ENCODE measurements at regions of chr7 and their contacts with region 1.

Region 1: DNA sequence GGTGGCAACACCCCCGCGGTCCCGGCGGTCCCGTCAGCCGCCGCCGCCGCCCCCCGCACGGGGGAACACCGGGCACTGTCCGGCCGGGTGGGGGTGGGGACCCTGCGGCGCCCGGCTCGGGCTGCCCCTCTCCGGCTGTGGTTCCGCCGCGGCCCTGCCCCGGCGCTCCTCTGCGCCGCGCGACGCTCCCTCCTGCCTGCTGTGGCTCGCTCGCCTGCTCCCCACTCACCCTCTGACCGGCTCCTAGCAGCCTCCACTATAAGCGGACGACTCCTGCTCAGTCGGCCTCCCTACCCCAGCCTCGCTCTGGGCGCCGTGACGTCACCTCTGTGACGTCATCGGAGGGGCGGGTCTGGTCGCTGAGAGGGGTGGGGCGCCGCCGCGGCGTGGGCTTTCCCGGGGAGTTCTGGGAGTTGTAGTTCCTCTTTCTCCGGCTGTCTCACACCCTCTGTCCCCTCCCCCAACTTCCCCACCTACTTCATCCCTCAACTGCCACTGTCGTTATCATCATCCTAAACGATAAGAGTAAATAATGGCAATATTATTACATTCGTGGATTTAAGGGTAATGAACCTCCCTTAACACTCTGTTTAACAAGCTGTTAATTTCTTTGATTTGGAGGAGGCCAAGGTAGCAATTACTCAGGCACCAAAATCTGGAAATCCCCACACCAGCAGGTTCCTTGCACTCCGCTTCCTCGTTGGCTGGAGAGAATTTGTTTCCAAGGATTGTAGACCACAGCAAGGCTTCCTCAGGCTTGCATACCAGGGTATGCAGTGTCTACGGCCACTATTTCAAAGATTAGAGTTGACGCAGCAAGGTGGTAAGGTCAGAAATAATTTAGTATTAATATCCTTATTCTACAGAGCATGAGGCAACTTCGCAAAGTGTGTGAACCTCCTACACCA is at the start of gene UBE2H:
- DNase-seq: peak; percentile 68 to 89
- H3K4me3 ChIP-seq: peak within 1 kb of the TSS; percentile 76
- H3K27ac ChIP-seq: peak within 1 kb of the TSS; percentile 100
- H3K4me1 ChIP-seq: peaks cover 42% of the 10 kb centered on the region
- H3K27me3 ChIP-seq: no peaks in the 10 kb centered on the region
- CTCF ChIP-seq: no peak
- total RNA-seq, gene UBE2H: 211 TPM in 2 replicates

Region 2: GRCh38 chr7:129664029-129665012 is 288.6 kb before region 1 on chr7:
- CTCF ChIA-PET with region 1: no interaction called
- POLR2A ChIA-PET with region 1: no interaction called
- intact Hi-C with region 1: loop called (anchors 10 kb)
- DNase-seq: peak; percentile 14 to 53
- H3K4me3 ChIP-seq: no peak overlapping the region
- H3K27ac ChIP-seq: peak overlapping the region; percentile 53
- H3K4me1 ChIP-seq: peaks cover 17% of the 10 kb centered on the region
- H3K27me3 ChIP-seq: no peaks in the 10 kb centered on the region
- CTCF ChIP-seq: peak; percentile 77

Region 3: GRCh38 chr7:129825496-129826267 is 127.2 kb before region 1 on chr7:
- CTCF ChIA-PET with region 1: interaction called, 5 read pairs
- POLR2A ChIA-PET with region 1: interaction called, 3 read pairs
- intact Hi-C with region 1: loop called (anchors 1 kb)
- DNase-seq: peak; percentile 70 to 95
- H3K4me3 ChIP-seq: peak overlapping the region; percentile 88
- H3K27ac ChIP-seq: peak overlapping the region; percentile 91
- H3K4me1 ChIP-seq: peaks cover 23% of the 10 kb centered on the region
- H3K27me3 ChIP-seq: no peaks in the 10 kb centered on the region
- CTCF ChIP-seq: peak; percentile 70

Region 4: DNA sequence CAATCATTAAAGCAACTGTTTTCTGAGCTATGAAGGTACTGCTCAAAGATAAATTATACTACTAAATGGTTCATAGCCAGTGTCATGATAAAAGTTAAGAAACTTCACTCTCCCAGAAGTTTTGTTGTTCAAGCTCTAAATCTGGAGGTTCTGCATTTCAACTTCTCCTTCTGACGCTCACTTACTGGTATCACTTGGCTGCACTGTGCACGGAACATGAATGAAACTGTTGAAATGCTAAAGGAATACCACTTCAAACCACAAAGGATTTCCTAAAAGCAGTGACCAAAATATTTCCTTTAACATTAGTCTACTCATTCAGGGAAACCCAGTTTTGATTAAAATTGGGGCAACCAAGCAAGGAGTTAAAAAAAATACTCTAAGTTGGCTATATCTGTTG is 93.7 kb before region 1 on chr7:
- CTCF ChIA-PET with region 1: no interaction called
- POLR2A ChIA-PET with region 1: no interaction called
- intact Hi-C with region 1: no loop called
- DNase-seq: no peak
- H3K4me3 ChIP-seq: no peak overlapping the region
- H3K27ac ChIP-seq: peak overlapping the region; percentile 44; the same call in 1 of the 2 replicates
- H3K4me1 ChIP-seq: peaks cover 88% of the 10 kb centered on the region
- H3K27me3 ChIP-seq: no peaks in the 10 kb centered on the region
- CTCF ChIP-seq: no peak

Region 5: DNA sequence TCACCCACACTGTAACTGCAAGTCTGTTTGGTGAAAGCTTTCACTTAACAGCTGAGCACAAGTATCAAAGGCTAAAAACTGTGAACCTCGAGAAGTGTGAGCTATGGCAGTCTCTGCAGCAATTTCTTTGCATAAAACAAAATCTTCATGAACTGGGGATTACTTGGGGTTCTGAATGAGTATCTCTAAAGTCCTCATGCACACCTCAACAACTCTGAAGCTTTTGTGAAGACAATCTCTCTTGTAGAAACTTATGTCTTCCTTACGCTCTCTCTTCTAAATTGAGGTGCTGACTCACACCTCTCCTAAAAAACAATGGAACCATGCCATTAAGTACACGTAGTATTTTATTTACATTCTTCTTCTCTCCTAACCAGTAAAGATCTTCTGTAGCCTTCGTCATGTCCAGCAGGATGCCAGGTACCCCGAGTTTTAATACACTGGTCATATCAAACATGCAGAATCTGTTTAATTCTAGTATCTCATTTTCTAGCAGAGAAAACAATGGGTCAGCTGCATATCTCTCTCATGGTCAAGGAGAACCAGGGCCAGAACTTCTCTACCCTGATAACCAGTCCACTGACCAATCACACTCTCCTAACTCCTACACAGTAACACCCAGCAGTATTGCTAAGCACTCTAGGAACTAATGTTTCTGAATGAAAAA is 77.0 kb before region 1 on chr7:
- CTCF ChIA-PET with region 1: interaction called, 14 read pairs
- POLR2A ChIA-PET with region 1: no interaction called
- intact Hi-C with region 1: no loop called
- DNase-seq: peak in 1 of 2 experiments; percentile 19
- H3K4me3 ChIP-seq: no peak overlapping the region
- H3K27ac ChIP-seq: peak overlapping the region; percentile 59
- H3K4me1 ChIP-seq: peaks cover 38% of the 10 kb centered on the region
- H3K27me3 ChIP-seq: no peaks in the 10 kb centered on the region
- CTCF ChIP-seq: no peak

Region 6: DNA sequence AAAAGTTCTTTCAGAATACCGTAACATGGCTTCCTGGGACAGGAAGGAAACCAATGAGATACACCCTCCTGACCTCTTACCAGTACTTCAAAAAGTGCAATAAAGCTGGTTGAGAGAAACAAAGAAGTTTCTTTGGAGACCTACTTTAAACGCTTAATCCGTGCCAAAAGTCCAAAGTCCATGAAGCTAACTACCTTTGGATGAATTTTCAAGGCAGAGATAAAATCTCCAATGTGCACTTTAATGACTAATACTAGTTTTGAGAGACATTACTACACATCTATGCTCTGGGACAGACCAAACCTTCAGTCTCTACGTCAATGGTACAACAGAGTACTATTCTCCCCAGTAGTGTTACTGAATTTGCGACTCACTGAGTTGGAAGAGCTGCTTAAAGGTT is 46.2 kb before region 1 on chr7:
- CTCF ChIA-PET with region 1: no interaction called
- POLR2A ChIA-PET with region 1: no interaction called
- intact Hi-C with region 1: no loop called
- DNase-seq: no peak
- H3K4me3 ChIP-seq: no peak overlapping the region
- H3K27ac ChIP-seq: no peak overlapping the region
- H3K4me1 ChIP-seq: peaks cover 9% of the 10 kb centered on the region
- H3K27me3 ChIP-seq: no peaks in the 10 kb centered on the region
- CTCF ChIP-seq: no peak

Region 7: DNA sequence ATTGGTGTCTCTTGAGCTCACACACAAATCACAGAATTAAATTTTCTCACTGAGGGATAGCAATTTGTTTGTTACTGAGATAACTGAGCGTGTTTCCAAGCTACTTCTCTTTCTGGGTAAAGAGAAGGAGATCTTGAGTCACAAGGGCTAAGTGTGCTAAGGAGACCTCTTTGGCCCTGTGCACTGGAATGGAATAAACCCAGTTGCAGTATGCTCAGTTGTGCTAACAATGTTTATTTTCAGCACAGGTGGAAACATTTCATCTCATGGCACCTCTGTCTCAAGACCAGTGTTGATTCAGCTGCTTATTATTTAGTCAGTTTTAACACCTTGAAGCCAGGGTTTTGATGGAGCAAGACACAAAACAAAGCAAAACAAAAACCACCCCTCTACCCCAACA is 22.4 kb after region 1 on chr7:
- CTCF ChIA-PET with region 1: interaction called, 15 read pairs
- POLR2A ChIA-PET with region 1: interaction called, 52 read pairs
- intact Hi-C with region 1: loop called (anchors 1 kb)
- DNase-seq: peak in 1 of 2 experiments; percentile 82
- H3K4me3 ChIP-seq: no peak overlapping the region
- H3K27ac ChIP-seq: peak overlapping the region; percentile 39; the same call in 1 of the 2 replicates
- H3K4me1 ChIP-seq: peaks cover 40% of the 10 kb centered on the region
- H3K27me3 ChIP-seq: no peaks in the 10 kb centered on the region
- CTCF ChIP-seq: no peak

Region 8: GRCh38 chr7:130079846-130080394 is 127.0 kb after region 1 on chr7:
- CTCF ChIA-PET with region 1: no interaction called
- POLR2A ChIA-PET with region 1: no interaction called
- intact Hi-C with region 1: no loop called
- DNase-seq: no peak
- H3K4me3 ChIP-seq: no peak overlapping the region
- H3K27ac ChIP-seq: no peak overlapping the region
- H3K4me1 ChIP-seq: peaks cover 8% of the 10 kb centered on the region; the same call in 1 of the 2 replicates
- H3K27me3 ChIP-seq: no peaks in the 10 kb centered on the region
- CTCF ChIP-seq: no peak

Region 9: DNA sequence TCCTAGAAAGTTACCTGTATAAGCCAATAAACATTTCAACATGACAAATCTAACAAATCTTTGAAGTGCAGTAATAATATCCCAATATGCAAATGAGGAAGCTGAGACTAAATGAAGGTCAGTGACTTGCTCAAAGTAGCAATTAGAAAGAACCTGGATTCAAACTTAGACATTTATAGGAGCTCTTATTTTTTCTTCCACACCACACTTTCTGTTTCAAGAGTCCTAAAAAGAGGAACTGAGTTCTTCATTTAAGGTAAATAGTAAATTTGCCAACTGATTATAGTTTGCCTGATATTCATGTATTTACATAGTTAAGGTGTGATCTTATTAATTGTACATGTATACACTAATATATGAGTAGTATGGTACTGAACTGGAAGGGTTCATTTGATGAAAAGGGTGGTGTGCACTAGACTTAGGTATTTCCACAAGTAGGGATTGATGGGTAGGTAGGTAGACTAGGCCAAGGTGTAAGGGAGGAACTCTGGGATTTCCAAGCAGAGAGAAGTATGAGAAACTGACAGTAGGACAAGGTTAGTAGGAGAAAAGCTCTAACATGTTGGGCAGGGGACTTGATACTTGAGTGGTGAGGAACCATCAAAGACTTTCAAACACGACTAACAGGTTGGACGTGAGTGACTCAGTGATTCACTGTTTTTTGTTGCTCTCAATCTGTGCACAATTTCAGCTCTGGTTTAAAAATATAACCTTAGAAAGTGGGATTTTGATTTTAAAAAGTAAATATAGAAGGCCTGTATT is 161.6 kb after region 1 on chr7:
- CTCF ChIA-PET with region 1: no interaction called
- POLR2A ChIA-PET with region 1: interaction called, 13 read pairs
- intact Hi-C with region 1: no loop called
- DNase-seq: peak; percentile 26 to 77
- H3K4me3 ChIP-seq: no peak overlapping the region
- H3K27ac ChIP-seq: peak overlapping the region; percentile 40
- H3K4me1 ChIP-seq: peaks cover 22% of the 10 kb centered on the region
- H3K27me3 ChIP-seq: no peaks in the 10 kb centered on the region
- CTCF ChIP-seq: no peak

Region 10: GRCh38 chr7:130430841-130431666 is 478.1 kb after region 1 on chr7:
- CTCF ChIA-PET with region 1: no interaction called
- POLR2A ChIA-PET with region 1: no interaction called
- intact Hi-C with region 1: no loop called
- DNase-seq: no peak
- H3K4me3 ChIP-seq: no peak overlapping the region
- H3K27ac ChIP-seq: no peak overlapping the region
- H3K4me1 ChIP-seq: peaks cover 13% of the 10 kb centered on the region
- H3K27me3 ChIP-seq: no peaks in the 10 kb centered on the region
- CTCF ChIP-seq: no peak

Measured in PC-9 (cell line).